ENCODE measurements at regions of chr22 and their contacts with region 1.

Region 1: GRCh38 chr22:36365020-36365411 is 22.8 kb downstream of the MYH9 start:
- DNase-seq: peak; percentile 79 to 93
- H3K4me3 ChIP-seq: peak overlapping the region; percentile 22 to 40
- H3K27ac ChIP-seq: peak overlapping the region; percentile 95
- H3K4me1 ChIP-seq: peaks cover 0 to 100% (median 98%) of the 10 kb centered on the region in 4 donors
- H3K27me3 ChIP-seq: no peaks in the 10 kb centered on the region
- CTCF ChIP-seq: no peak

Region 2: GRCh38 chr22:36329254-36330078 is 35.5 kb before region 1 on chr22:
- intact Hi-C with region 1: loop called (anchors 5 kb)
- DNase-seq: peak; percentile 66 to 91
- H3K4me3 ChIP-seq: peak overlapping the region; percentile 6 to 16
- H3K27ac ChIP-seq: peak overlapping the region; percentile 95
- H3K4me1 ChIP-seq: peaks cover 4 to 100% (median 97%) of the 10 kb centered on the region in 4 donors
- H3K27me3 ChIP-seq: no peaks in the 10 kb centered on the region
- CTCF ChIP-seq: no peak